Left colon (tissue), 2 donors: ENCODE measurements at regions of chr12 and their contacts with region 1.

Region 1: GRCh38 chr12:123150744-123151456 is at the start of gene PITPNM2:
- DNase-seq: peak in 1 of 2 donors; percentile 78
- ATAC-seq: peak; percentile 84
- total RNA-seq, gene PITPNM2: 11.4 to 17.6 TPM

Region 2: DNA sequence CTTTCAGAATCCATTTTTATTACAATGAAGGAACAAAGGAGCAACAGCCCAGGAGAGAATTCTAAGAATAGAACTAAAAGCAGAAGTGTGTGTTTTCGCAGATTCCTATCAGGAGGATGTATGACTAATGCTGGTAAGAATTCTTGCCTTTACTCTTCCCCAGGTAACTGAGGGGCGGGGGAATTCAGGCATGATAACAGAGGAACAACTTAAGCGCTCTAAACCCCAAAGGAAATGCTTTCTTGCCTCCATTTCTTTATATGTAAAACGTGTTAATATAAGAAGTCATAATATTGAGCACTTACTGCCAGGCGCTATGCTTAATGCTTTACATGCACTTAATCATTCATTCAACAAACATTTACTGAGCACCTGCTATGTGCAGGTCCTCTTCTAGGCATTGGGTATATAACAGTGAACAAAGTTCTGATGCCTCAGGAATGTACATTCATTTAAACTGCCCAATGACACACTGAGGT is 424.8 kb before region 1 on chr12:
- intact Hi-C with region 1: no loop called
- DNase-seq: no peak
- ATAC-seq: no peak

Region 3: DNA sequence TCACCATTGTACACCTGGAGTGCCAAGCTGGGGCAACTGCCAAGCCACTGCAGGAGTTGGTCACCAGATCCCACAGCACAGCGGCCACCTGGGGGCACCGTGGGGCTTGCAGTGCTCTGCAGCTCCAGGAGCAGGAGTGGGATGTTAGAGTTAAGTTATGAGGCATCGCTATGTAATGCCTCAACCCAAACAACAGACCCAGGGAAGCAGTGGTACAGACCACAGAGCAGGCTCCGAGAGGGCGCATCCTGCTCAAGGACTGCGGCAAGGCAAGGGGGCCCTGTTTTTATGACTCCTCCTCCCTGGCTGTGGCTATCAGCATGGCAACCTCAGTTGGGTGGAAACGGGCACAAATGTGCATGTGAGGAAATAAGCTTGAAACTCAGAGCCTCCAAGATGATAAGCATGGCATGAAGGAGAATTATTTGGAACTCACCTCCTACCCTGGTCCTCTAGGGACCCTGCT is 107.3 kb before region 1 on chr12:
- intact Hi-C with region 1: loop called (anchors 5 to 10 kb)
- DNase-seq: peak; percentile 81 to 89
- ATAC-seq: peak; percentile 95

Region 4: GRCh38 chr12:123931686-123932321 is 780.9 kb after region 1 on chr12:
- intact Hi-C with region 1: no loop called
- DNase-seq: no peak
- ATAC-seq: no peak